Activated naive CD4-positive, alpha-beta T cell treated with anti-CD3 and anti-CD28 coated beads for 36 hours (primary cell): ENCODE measurements at regions of chr15 and their contacts with region 1.

Region 1: DNA sequence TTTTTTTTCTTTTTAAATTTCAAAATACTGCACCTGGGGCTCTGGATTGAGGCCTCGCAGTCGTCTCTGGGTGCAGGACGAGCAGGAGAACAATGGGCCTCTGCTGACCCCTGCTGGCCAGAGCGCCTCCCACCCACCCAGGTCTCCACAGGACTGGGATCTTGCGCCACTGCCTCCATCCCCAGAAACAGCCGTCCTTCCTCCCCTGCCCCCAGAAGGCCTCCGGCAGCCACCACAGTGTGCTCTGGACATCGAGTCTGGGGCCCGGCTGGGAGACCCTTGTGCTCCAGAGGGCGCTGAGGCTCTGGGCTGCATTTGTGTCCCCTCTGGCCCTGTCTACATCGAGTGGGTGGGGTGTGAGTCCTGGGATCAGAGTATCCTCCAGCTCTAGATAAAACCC is 6.6 kb upstream of the ACSBG1 start:
- DNase-seq: peak; percentile 92
- H3K4me3 Mint-ChIP-seq: no peak overlapping the region
- H3K27ac Mint-ChIP-seq: no peak overlapping the region
- H3K4me1 Mint-ChIP-seq: no peaks in the 10 kb centered on the region
- H3K27me3 Mint-ChIP-seq: no peaks in the 10 kb centered on the region

Region 2: DNA sequence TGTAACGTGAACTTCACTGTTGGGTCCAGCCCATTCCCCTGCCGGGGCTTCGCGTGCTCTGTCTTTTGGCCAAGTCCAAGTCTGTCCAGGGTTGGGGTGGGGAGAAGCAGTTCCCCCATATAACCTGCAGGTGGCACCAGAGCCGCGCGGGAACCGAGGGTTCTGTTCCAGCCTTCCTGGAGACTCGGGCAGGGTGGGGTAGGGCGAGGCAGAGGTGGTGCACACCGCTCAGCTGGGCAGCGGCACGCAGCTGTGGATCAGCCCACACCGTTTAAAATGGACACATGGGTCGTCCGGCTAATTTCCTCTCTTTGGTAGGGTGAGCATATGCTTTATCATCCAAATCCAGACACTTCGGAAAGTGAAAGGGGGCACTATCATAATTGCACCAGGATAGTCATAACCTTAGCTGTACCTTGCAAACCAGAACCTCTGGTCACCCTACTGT is 281.6 kb before region 1 on chr15:
- CTCF ChIA-PET with region 1: interaction called, 18 read pairs
- intact Hi-C with region 1: loop called (anchors 2 kb)
- DNase-seq: peak; percentile 85
- H3K4me3 Mint-ChIP-seq: peak overlapping the region; percentile 17
- H3K27ac Mint-ChIP-seq: no peak overlapping the region
- H3K4me1 Mint-ChIP-seq: peaks cover under 1% of the 10 kb centered on the region
- H3K27me3 Mint-ChIP-seq: peaks cover 3% of the 10 kb centered on the region

Region 3: DNA sequence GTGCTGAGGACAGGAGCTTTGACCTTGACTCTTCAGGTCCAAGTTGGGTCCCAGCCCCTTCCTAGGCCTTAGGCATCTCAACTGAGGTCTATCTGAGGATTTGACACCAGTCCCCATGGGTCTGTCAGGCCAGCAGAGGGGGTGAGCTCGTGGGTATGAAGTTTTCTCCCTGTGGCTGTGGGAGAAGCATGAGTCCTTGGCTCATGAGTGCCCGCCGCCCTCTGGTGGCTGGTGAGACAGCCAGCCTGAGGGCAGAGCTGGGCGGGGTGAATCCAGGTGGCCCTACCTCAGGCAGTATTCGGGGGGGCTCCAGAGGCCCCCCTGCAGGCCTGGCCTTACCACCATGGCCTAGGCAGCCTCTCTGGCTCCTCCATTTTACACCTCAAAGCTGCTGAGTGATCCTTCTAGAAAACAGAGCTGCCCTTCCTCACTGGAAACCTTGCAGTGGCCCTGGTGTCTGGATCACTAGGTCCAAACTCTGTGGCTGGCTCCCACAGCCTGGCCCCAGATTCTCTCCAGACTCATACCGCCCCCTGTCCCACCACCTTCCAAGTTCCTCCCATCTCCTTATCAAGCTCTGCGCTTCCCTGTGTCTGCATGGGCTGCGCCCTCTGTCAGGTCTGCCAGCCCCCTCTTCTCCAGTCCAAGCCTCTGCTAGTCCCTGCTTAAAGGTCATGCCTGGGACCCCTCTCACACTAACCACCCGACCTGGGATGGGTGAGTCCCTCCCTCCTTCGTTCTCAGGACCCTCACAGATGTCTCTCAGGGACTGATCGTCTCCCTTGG is 132.5 kb before region 1 on chr15:
- CTCF ChIA-PET with region 1: interaction called, 74 read pairs
- intact Hi-C with region 1: loop called (anchors 1 kb)
- DNase-seq: peak; percentile 89
- H3K4me3 Mint-ChIP-seq: no peak overlapping the region
- H3K27ac Mint-ChIP-seq: no peak overlapping the region
- H3K4me1 Mint-ChIP-seq: peaks cover 21% of the 10 kb centered on the region
- H3K27me3 Mint-ChIP-seq: no peaks in the 10 kb centered on the region

Region 4: DNA sequence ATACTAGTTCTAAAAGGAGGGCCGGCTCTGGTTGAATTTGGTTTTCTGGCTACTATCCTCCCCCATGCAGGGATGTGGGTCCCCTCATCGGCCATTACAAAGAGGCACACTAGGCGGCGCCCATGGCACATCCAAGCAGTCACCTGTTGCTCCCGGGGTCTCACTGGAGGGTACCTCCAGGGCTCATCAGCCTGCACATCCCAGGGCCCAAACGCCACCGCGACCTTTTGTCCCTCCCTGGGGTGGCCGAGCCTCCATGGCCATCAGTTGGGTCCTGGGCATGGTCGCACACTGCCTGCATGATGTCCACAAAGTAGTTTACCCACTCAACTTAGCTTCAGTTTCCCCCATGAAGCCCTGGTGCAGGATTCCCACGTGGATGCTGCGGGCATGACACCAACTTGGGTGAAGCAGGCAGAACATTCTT is 63.5 kb before region 1 on chr15:
- CTCF ChIA-PET with region 1: interaction called, 7 read pairs
- intact Hi-C with region 1: loop called (anchors 5 kb)
- DNase-seq: peak; percentile 58
- H3K4me3 Mint-ChIP-seq: no peak overlapping the region
- H3K27ac Mint-ChIP-seq: no peak overlapping the region
- H3K4me1 Mint-ChIP-seq: peaks cover 17% of the 10 kb centered on the region
- H3K27me3 Mint-ChIP-seq: no peaks in the 10 kb centered on the region

Region 5: GRCh38 chr15:78216708-78217107 is 24.3 kb before region 1 on chr15:
- CTCF ChIA-PET with region 1: interaction called, 10 read pairs
- intact Hi-C with region 1: no loop called
- DNase-seq: no peak
- H3K4me3 Mint-ChIP-seq: no peak overlapping the region
- H3K27ac Mint-ChIP-seq: no peak overlapping the region
- H3K4me1 Mint-ChIP-seq: no peaks in the 10 kb centered on the region
- H3K27me3 Mint-ChIP-seq: peaks cover 2% of the 10 kb centered on the region

Region 6: GRCh38 chr15:78255421-78256043 is 14.5 kb after region 1 on chr15:
- CTCF ChIA-PET with region 1: interaction called, 13 read pairs
- intact Hi-C with region 1: no loop called
- DNase-seq: no peak
- H3K4me3 Mint-ChIP-seq: no peak overlapping the region
- H3K27ac Mint-ChIP-seq: no peak overlapping the region
- H3K4me1 Mint-ChIP-seq: no peaks in the 10 kb centered on the region
- H3K27me3 Mint-ChIP-seq: no peaks in the 10 kb centered on the region

Region 7: GRCh38 chr15:79505956-79506355 is 1264.9 kb after region 1 on chr15:
- CTCF ChIA-PET with region 1: no interaction called
- intact Hi-C with region 1: no loop called
- DNase-seq: no peak
- H3K4me3 Mint-ChIP-seq: no peak overlapping the region
- H3K27ac Mint-ChIP-seq: no peak overlapping the region
- H3K4me1 Mint-ChIP-seq: no peaks in the 10 kb centered on the region
- H3K27me3 Mint-ChIP-seq: no peaks in the 10 kb centered on the region